ENCODE measurements at regions of chr4 and their contacts with region 1.

Region 1: DNA sequence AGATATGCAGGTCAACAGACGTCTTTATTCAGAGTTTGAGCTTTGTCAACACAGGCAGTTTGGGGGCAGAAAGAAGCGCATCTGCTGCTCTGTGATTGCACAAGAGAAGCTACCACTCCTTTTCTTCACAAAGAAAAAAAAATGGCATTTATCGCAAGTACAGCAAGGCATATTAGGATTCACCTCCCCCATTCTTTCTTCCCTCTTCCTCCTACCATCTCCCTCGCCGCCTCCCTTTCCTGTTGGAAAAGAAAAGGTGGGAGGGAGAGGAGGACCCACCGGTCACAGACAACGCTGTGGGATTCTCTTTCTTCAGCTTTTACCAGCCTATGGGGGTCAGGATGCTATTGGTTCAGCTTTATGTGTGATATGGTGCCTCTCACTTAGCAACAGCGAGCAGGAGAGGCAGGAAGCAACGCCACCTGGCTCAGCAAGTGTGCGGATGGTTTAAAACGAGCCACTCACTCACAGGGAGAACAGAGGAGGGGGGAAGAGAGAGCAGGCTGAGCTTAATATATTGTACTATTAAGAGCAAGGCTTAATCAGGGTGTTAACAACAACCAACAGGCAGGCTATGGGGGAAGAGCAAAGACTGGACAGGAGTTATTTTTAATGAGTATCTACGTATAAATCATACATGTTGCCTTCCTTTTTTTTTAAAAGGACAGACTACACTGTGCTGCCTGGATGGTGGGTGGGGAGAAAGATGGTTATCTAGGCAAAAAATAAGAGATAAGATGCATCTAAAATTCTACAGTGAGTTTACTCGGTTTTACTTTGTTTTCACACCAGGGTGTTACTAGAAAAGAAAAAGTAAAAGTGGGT is 104.7 kb downstream of the MAML3 start:
- DNase-seq: peak in 5 of 6 donors; percentile 34 to 59 (median 38)
- ATAC-seq: peak; percentile 84 to 94 (median 90)
- H3K4me3 ChIP-seq: peak overlapping the region in 2 of 4 donors; percentile 12 to 30
- H3K27ac ChIP-seq: peak overlapping the region; percentile 7 to 71 (median 52)
- H3K4me1 ChIP-seq: peaks cover 0 to 7% (median 4%) of the 10 kb centered on the region in 3 donors
- H3K27me3 ChIP-seq: no peaks in the 10 kb centered on the region
- CTCF ChIP-seq: no peak

Region 2: DNA sequence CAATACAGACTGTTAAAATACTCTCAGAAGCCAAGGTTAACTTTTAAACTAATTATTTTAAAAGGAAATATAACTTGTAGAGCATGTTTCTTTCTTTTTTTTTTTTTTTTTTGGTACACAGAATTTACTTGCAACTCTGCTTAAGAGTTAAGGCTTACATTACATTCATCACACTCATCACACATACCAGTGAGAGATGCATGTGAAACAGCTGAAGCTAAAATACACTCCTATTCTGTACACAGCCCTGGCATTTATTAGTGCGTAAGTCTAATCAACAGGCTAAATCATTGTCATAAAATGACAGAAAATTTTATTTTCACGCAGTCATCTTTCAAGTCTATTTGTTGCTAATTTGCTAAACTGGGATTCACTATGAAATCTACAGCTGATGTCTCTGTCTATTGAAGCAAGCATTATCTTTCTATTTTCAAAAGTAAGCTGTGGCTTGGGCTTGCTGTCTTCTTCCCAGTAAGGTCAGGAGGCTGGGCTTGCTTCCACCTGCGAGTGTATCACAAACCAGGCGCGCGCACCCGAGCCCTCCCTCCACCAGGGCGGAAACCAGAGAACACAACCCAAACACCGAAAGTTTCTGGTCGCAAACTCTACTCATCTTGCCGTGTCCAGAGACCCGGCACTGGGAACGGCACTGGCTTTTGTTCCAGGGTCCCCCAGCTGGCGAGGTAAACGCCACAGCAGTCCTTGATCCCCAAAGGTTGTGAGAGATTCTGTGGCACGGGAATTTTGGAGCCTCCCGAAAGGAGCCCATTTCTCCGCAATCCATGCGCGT is 100.8 kb after region 1 on chr4:
- intact Hi-C with region 1: loop called in 1 of 3 experiments (anchors 10 kb)
- DNase-seq: peak; percentile 76 to 86 (median 80)
- ATAC-seq: peak; percentile 19 to 30 (median 19)
- H3K4me3 ChIP-seq: peak overlapping the region; percentile 52 to 69 (median 66)
- H3K27ac ChIP-seq: peak overlapping the region; percentile 75 to 99 (median 95)
- H3K4me1 ChIP-seq: peaks cover 13 to 31% (median 25%) of the 10 kb centered on the region in 3 donors
- H3K27me3 ChIP-seq: no peaks in the 10 kb centered on the region
- CTCF ChIP-seq: no peak

Measured in pancreas (tissue), 10 donors.